GM12878 (cell line): ENCODE measurements at regions of chrX and their contacts with region 1.

Region 1: GRCh38 chrX:31293409-31293808 is 221.6 kb upstream of the FTHL17 start:
- DNase-seq: no peak
- ATAC-seq: peak; percentile 90
- H3K4me3 ChIP-seq: no peak overlapping the region
- H3K27ac ChIP-seq: no peak overlapping the region
- H3K4me1 ChIP-seq: no peaks in the 10 kb centered on the region
- H3K27me3 ChIP-seq: no peaks in the 10 kb centered on the region
- CTCF ChIP-seq: peak; percentile 61 to 70 (median 61)
- EP300 ChIP-seq: no peak
- POLR2A ChIP-seq: no peak
- RAD21 ChIP-seq: peak; percentile 84

Region 2: GRCh38 chrX:30900227-30900626 is 393.2 kb before region 1 on chrX:
- CTCF ChIA-PET with region 1: no interaction called
- POLR2A ChIA-PET with region 1: no interaction called
- RAD21 ChIA-PET with region 1: no interaction called
- SMC1A ChIA-PET with region 1: no interaction called
- in situ Hi-C with region 1: no loop called
- intact Hi-C with region 1: no loop called
- DNase-seq: no peak
- ATAC-seq: peak; percentile 40; the same call in 2 of the 3 replicates
- H3K4me3 ChIP-seq: no peak overlapping the region
- H3K27ac ChIP-seq: no peak overlapping the region
- H3K4me1 ChIP-seq: no peaks in the 10 kb centered on the region
- H3K27me3 ChIP-seq: no peaks in the 10 kb centered on the region; a peak in 1 of 4 replicates
- CTCF ChIP-seq: no peak
- EP300 ChIP-seq: no peak
- POLR2A ChIP-seq: no peak
- RAD21 ChIP-seq: no peak

Region 3: GRCh38 chrX:30971774-30972603 is 321.4 kb before region 1 on chrX:
- CTCF ChIA-PET with region 1: interaction called, 5 read pairs
- POLR2A ChIA-PET with region 1: no interaction called
- RAD21 ChIA-PET with region 1: interaction called, 4 read pairs
- SMC1A ChIA-PET with region 1: interaction called, 5 read pairs
- in situ Hi-C with region 1: no loop called
- intact Hi-C with region 1: loop called (anchors 1 kb)
- DNase-seq: no peak
- ATAC-seq: peak; percentile 99
- H3K4me3 ChIP-seq: no peak overlapping the region
- H3K27ac ChIP-seq: no peak overlapping the region
- H3K4me1 ChIP-seq: no peaks in the 10 kb centered on the region
- H3K27me3 ChIP-seq: no peaks in the 10 kb centered on the region
- CTCF ChIP-seq: peak; percentile 77 to 80 (median 79)
- EP300 ChIP-seq: no peak
- POLR2A ChIP-seq: no peak
- RAD21 ChIP-seq: peak; percentile 51

Region 4: GRCh38 chrX:31223817-31224216 is 69.6 kb before region 1 on chrX:
- CTCF ChIA-PET with region 1: interaction called, 12 read pairs
- POLR2A ChIA-PET with region 1: no interaction called
- RAD21 ChIA-PET with region 1: interaction called, 3 read pairs
- SMC1A ChIA-PET with region 1: no interaction called
- in situ Hi-C with region 1: no loop called
- intact Hi-C with region 1: no loop called
- DNase-seq: no peak
- ATAC-seq: peak; percentile 86
- H3K4me3 ChIP-seq: no peak overlapping the region
- H3K27ac ChIP-seq: peak overlapping the region; percentile 18; the same call in 1 of the 2 replicates
- H3K4me1 ChIP-seq: peaks cover 10% of the 10 kb centered on the region
- H3K27me3 ChIP-seq: no peaks in the 10 kb centered on the region
- CTCF ChIP-seq: 0 out of 6 replicates have a peak, but pooled peaks of 1 of the 3 experiments have one; percentile 4
- EP300 ChIP-seq: no peak
- POLR2A ChIP-seq: no peak
- RAD21 ChIP-seq: no peak

Region 5: DNA sequence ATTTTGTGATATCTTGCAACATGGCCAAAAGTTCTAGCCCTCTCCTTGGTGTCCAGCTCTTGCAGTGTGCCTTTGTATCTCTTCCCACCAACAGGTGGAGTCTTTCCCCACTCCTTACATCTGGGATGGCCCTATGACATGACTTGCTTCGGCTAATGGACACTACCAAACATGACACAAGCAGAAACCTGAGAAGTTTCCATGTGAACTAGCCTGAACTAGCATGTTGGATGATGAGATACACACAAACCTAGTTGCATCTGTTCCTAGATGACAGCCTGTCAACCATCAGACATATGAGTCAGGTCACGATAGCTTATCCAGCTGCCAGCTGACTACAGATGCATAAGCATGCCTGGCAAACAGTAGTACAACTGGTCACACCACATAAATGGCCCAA is 14.1 kb before region 1 on chrX:
- CTCF ChIA-PET with region 1: interaction called, 5 read pairs
- POLR2A ChIA-PET with region 1: no interaction called
- RAD21 ChIA-PET with region 1: interaction called, 5 read pairs
- SMC1A ChIA-PET with region 1: interaction called, 12 read pairs
- in situ Hi-C with region 1: no loop called
- intact Hi-C with region 1: no loop called
- DNase-seq: no peak
- ATAC-seq: peak; percentile 41
- H3K4me3 ChIP-seq: no peak overlapping the region
- H3K27ac ChIP-seq: no peak overlapping the region
- H3K4me1 ChIP-seq: no peaks in the 10 kb centered on the region
- H3K27me3 ChIP-seq: no peaks in the 10 kb centered on the region
- CTCF ChIP-seq: no peak; a peak in 1 of 6 replicates
- EP300 ChIP-seq: no peak
- POLR2A ChIP-seq: no peak
- RAD21 ChIP-seq: 0 out of 2 replicates have a peak, but pooled peaks have one; percentile 9

Region 6: DNA sequence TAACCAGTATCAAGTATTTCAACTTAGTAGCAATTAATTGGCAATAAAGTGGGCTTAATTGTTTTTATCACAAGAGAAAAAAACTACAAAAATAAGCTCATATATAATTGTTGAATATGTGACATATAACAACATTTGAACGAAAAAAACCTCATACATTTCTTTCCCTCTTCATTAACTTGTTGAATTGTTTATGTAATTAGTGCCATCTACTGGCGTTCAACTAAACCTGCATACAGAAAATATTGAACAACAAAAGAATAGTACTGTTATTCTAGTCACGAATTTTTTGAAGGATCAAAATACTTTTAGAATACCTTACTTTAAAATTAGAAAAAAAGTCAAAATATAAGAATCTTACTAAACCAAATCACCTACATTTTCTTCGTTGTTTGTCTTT is 365.0 kb after region 1 on chrX:
- CTCF ChIA-PET with region 1: interaction called, 9 read pairs
- POLR2A ChIA-PET with region 1: no interaction called
- RAD21 ChIA-PET with region 1: interaction called, 13 read pairs
- SMC1A ChIA-PET with region 1: interaction called, 13 read pairs
- in situ Hi-C with region 1: no loop called
- intact Hi-C with region 1: loop called (anchors 2 kb)
- DNase-seq: no peak
- ATAC-seq: peak; percentile 65
- H3K4me3 ChIP-seq: no peak overlapping the region
- H3K27ac ChIP-seq: no peak overlapping the region
- H3K4me1 ChIP-seq: no peaks in the 10 kb centered on the region
- H3K27me3 ChIP-seq: no peaks in the 10 kb centered on the region
- CTCF ChIP-seq: peak; percentile 24 to 61 (median 40); a peak in 4 of 6 replicates
- EP300 ChIP-seq: no peak
- POLR2A ChIP-seq: no peak
- RAD21 ChIP-seq: peak; percentile 64